Caco-2 (cell line): ENCODE measurements at regions of chr2 and their contacts with region 1.

Region 1: DNA sequence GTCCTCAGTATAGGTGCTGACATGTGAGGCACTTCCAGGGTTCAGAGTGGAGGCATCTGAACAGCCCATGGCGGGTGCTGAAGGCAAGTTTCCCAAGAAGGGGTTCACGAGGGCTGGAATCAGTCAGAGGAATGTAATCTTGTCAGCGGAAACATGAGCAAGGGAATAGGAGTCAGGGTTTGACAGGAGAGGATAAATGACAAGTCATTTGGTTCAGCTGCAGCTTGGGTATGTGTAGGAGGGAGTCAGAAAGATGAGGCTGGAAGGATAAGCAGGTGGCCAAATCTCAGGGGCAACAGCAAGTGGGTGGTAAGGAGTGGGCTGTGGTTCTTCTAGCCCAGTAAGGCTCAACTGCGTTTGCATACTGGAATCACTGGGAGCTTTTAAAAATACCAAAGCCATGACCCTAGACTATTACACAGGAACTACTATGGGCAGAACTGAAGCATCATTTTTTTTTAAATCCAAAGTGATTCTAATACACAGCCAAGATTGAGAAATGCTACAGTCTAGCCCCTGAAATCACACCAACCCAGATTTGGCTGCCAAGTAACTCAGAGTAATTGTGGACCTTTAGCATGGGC is 41.8 kb upstream of the NAB1 start:
- DNase-seq: peak in 1 of 2 experiments; percentile 41
- H3K4me3 ChIP-seq: no peak overlapping the region
- H3K4me3 Mint-ChIP-seq: no peak overlapping the region
- H3K27ac Mint-ChIP-seq: peak overlapping the region; percentile 24
- H3K4me1 ChIP-seq: peaks cover 61% of the 10 kb centered on the region
- H3K4me1 Mint-ChIP-seq: peaks cover 48% of the 10 kb centered on the region
- H3K27me3 ChIP-seq: no peaks in the 10 kb centered on the region
- H3K27me3 Mint-ChIP-seq: no peaks in the 10 kb centered on the region
- CTCF ChIP-seq: no peak

Region 2: GRCh38 chr2:190528521-190529001 is 78.5 kb before region 1 on chr2:
- CTCF ChIA-PET with region 1: no interaction called
- POLR2A ChIA-PET with region 1: no interaction called
- intact Hi-C with region 1: loop called (anchors 1 kb)
- DNase-seq: peak; percentile 78
- H3K4me3 ChIP-seq: no peak overlapping the region
- H3K4me3 Mint-ChIP-seq: peak overlapping the region; percentile 59
- H3K27ac Mint-ChIP-seq: peak overlapping the region; percentile 93
- H3K4me1 ChIP-seq: peaks cover 75% of the 10 kb centered on the region
- H3K4me1 Mint-ChIP-seq: peaks cover 47% of the 10 kb centered on the region
- H3K27me3 ChIP-seq: no peaks in the 10 kb centered on the region
- H3K27me3 Mint-ChIP-seq: no peaks in the 10 kb centered on the region
- CTCF ChIP-seq: no peak

Region 3: DNA sequence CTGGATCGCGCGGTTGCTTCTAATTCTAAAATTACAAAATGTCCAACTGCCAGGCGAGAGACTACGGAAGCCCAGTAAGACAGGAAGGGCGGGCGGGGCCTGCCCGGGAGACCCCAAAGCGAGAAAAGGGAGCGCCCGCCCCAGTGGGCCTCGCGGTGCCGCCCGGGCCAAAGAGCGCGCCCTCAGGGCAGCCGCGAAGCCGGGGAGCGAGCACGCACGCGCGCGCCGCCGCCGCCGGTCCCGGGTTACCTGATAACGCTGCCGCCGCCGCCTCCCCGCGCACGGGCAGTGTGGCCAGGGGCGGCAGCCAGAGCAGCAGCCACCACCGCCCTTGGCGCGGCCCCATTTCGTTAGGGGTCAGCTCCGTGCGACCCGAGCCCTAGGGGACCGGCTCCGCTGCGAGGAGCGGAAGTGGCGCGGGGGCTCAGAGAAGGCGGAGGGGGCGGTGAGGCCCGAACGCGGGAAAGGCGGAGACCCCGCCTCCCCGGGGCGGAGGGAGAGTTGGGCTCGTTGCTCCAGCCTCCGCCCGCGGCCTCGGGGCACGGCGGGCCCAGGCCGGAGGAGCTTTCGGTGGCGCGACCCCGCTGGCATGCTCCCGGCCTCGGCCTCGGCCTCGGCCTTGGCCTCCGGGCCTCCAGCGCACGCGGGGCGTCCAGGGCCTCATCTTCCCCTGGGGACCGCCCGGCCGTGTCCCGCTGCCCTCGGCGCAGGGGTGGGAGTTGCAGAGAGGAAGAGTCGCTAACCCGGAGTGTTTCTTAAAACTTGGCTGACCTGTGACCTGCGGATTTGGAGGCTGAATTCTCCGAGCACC is 72.6 kb before region 1 on chr2 and contains the start of gene NEMP2:
- CTCF ChIA-PET with region 1: no interaction called
- POLR2A ChIA-PET with region 1: no interaction called
- intact Hi-C with region 1: loop called (anchors 1 kb)
- DNase-seq: peak; percentile 92 to 93
- H3K4me3 ChIP-seq: peak within 1 kb of the TSS; percentile 72
- H3K4me3 Mint-ChIP-seq: peak within 1 kb of the TSS; percentile 81
- H3K27ac Mint-ChIP-seq: peak within 1 kb of the TSS; percentile 87
- H3K4me1 ChIP-seq: peaks cover 29% of the 10 kb centered on the region
- H3K4me1 Mint-ChIP-seq: peaks cover 25% of the 10 kb centered on the region
- H3K27me3 ChIP-seq: no peaks in the 10 kb centered on the region
- H3K27me3 Mint-ChIP-seq: no peaks in the 10 kb centered on the region
- CTCF ChIP-seq: no peak
- total RNA-seq, gene NEMP2: 19.1 and 20.2 TPM in 2 replicates

Region 4: GRCh38 chr2:190551928-190552327 is 55.2 kb before region 1 on chr2:
- CTCF ChIA-PET with region 1: no interaction called
- POLR2A ChIA-PET with region 1: no interaction called
- intact Hi-C with region 1: no loop called
- DNase-seq: no peak
- H3K4me3 ChIP-seq: no peak overlapping the region
- H3K4me3 Mint-ChIP-seq: no peak overlapping the region
- H3K27ac Mint-ChIP-seq: no peak overlapping the region
- H3K4me1 ChIP-seq: peaks cover 6% of the 10 kb centered on the region; the same call in 1 of the 2 replicates
- H3K4me1 Mint-ChIP-seq: peaks cover 3% of the 10 kb centered on the region
- H3K27me3 ChIP-seq: no peaks in the 10 kb centered on the region
- H3K27me3 Mint-ChIP-seq: no peaks in the 10 kb centered on the region
- CTCF ChIP-seq: no peak

Region 5: GRCh38 chr2:190578158-190579057 is 28.7 kb before region 1 on chr2:
- CTCF ChIA-PET with region 1: no interaction called
- POLR2A ChIA-PET with region 1: no interaction called
- intact Hi-C with region 1: loop called (anchors 1 kb)
- DNase-seq: peak; percentile 74 to 91
- H3K4me3 ChIP-seq: no peak overlapping the region
- H3K4me3 Mint-ChIP-seq: peak overlapping the region; percentile 56
- H3K27ac Mint-ChIP-seq: peak overlapping the region; percentile 65
- H3K4me1 ChIP-seq: peaks cover 36% of the 10 kb centered on the region
- H3K4me1 Mint-ChIP-seq: peaks cover 33% of the 10 kb centered on the region
- H3K27me3 ChIP-seq: no peaks in the 10 kb centered on the region
- H3K27me3 Mint-ChIP-seq: no peaks in the 10 kb centered on the region
- CTCF ChIP-seq: no peak

Region 6: DNA sequence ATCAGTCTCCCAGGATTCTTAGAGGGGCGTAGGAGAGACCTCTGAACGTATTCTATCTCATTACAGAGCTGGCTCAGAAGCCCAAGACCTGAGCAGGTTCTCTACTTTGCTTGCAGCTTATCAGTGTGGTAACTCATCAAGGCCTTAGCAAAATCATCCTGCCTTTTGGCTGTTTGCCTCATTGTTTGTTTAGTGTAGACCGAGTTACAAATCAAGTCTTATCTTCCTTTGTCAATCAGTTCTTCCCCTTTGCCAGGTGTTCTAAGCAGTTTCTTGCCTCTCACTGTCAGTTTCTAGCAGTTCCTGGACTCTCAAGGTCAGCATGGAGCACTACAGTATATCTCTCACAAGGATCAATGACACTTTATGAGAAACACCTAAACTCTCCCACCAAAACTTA is 10.9 kb after region 1 on chr2:
- CTCF ChIA-PET with region 1: no interaction called
- POLR2A ChIA-PET with region 1: no interaction called
- intact Hi-C with region 1: loop called (anchors 1 kb)
- DNase-seq: peak; percentile 65 to 73
- H3K4me3 ChIP-seq: no peak overlapping the region
- H3K4me3 Mint-ChIP-seq: peak overlapping the region; percentile 12
- H3K27ac Mint-ChIP-seq: peak overlapping the region; percentile 15
- H3K4me1 ChIP-seq: peaks cover 27% of the 10 kb centered on the region
- H3K4me1 Mint-ChIP-seq: peaks cover 26% of the 10 kb centered on the region
- H3K27me3 ChIP-seq: no peaks in the 10 kb centered on the region
- H3K27me3 Mint-ChIP-seq: no peaks in the 10 kb centered on the region
- CTCF ChIP-seq: no peak